ENCODE measurements at regions of chr4 and their contacts with region 1.

Region 1: GRCh38 chr4:85591406-85592098 is 116.6 kb downstream of the ARHGAP24 start:
- DNase-seq: no peak
- ATAC-seq: no peak
- H3K4me3 ChIP-seq: no peak overlapping the region
- H3K27ac ChIP-seq: no peak overlapping the region
- H3K4me1 ChIP-seq: peaks cover 0 to 18% (median 5%) of the 10 kb centered on the region in 12 donors
- H3K27me3 ChIP-seq: no peaks in the 10 kb centered on the region
- CTCF ChIP-seq: no peak
- POLR2A ChIP-seq: no peak

Region 2: DNA sequence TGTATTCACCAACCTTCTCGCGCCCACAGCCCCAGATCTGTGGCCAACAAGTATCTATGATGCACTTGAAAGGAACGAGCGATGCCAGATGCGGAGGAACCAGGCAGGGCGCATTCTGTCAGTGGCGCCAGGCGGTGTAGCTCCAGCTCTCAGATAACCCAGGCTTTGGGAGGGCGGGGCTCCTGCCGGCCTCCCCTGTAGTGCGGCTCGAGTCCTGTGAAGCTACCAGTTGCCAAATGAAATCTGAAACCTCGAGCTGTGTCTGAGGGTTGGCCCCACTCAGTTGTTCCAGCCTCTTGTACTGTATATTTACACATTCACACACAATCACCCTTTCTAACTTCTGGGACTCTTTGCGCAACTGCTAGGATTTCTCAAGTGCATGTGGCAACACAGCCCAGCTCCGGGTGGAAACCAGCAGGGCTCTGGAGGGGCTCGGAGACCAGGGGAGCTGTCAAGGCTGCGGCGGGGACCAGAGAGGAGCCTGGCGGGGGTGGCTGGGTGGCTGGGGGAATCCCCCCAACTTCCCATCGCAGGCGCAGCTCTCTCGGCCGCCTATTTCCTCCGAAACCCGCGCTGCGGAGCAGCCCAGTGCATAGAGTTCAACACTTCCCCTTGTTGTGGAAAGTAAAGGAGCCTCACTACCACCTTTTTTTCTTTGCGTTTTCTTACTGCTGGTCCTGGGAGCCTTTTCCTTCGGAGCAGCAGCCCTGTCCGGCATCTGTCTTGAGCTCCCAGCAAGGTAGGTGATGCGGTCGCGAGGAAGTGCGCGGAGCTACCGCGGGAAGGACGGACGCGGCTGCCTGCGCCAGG is 116.5 kb before region 1 on chr4 and contains the start of gene ARHGAP24:
- intact Hi-C with region 1: loop called in 2 of 10 experiments (anchors 5 to 10 kb)
- DNase-seq: peak; percentile 83 to 92 (median 90)
- ATAC-seq: peak; percentile 96 to 98 (median 98)
- H3K4me3 ChIP-seq: peak within 1 kb of the TSS; percentile 2 to 85 (median 71)
- H3K27ac ChIP-seq: peak within 1 kb of the TSS; percentile 47 to 90 (median 80)
- H3K4me1 ChIP-seq: peaks cover 0 to 28% (median 7%) of the 10 kb centered on the region in 12 donors
- H3K27me3 ChIP-seq: no peaks in the 10 kb centered on the region
- CTCF ChIP-seq: peak in 1 of 12 donors; percentile 13
- POLR2A ChIP-seq: peak in 1 of 2 donors; percentile 23
- total RNA-seq, gene ARHGAP24: 14.9 to 36.9 (median 25.1) TPM

Region 3: GRCh38 chr4:85725721-85726170 is 134.2 kb after region 1 on chr4:
- intact Hi-C with region 1: loop called in 2 of 10 experiments (anchors 5 to 10 kb)
- DNase-seq: peak; percentile 47 to 79 (median 65)
- ATAC-seq: peak; percentile 94 to 99 (median 95)
- H3K4me3 ChIP-seq: no peak overlapping the region
- H3K27ac ChIP-seq: peak overlapping the region; percentile 40 to 96 (median 68)
- H3K4me1 ChIP-seq: peaks cover 0 to 49% (median 27%) of the 10 kb centered on the region in 12 donors
- H3K27me3 ChIP-seq: no peaks in the 10 kb centered on the region
- CTCF ChIP-seq: no peak
- POLR2A ChIP-seq: peak in 1 of 2 donors; percentile 2

Region 4: GRCh38 chr4:85741921-85742591 is 150.5 kb after region 1 on chr4:
- intact Hi-C with region 1: loop called in 2 of 10 experiments (anchors 5 to 10 kb)
- DNase-seq: peak; percentile 33 to 68 (median 56)
- ATAC-seq: peak; percentile 20 to 75 (median 34)
- H3K4me3 ChIP-seq: no peak overlapping the region
- H3K27ac ChIP-seq: peak overlapping the region in 7 of 12 donors; percentile 3 to 89 (median 23)
- H3K4me1 ChIP-seq: peaks cover 0 to 69% (median 13%) of the 10 kb centered on the region in 12 donors
- H3K27me3 ChIP-seq: no peaks in the 10 kb centered on the region
- CTCF ChIP-seq: no peak
- POLR2A ChIP-seq: no peak

Region 5: DNA sequence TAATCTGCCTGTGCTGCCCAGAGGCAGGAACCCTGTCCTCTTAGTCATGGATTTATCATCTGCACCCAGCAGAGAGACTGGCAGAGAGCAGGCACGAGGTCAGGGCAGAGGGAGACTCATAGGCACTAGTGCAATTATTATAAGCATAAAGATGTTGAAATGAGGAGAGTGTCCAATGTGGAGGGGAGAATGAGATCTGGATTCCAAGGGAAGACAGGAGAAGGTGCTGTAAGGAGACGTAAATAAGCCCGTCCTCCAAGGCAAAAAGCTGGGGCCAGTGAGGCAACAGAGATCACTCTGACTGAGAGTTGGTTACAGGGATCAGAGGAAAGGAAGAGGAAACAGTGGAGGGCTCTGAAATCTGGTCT is 362.1 kb after region 1 on chr4:
- intact Hi-C with region 1: loop called in 1 of 10 experiments (anchors 10 kb)
- DNase-seq: no peak
- ATAC-seq: peak in 3 of 4 donors; percentile 72 to 89 (median 87)
- H3K4me3 ChIP-seq: no peak overlapping the region
- H3K27ac ChIP-seq: no peak overlapping the region
- H3K4me1 ChIP-seq: peaks cover 0 to 20% (median 10%) of the 10 kb centered on the region in 12 donors
- H3K27me3 ChIP-seq: no peaks in the 10 kb centered on the region
- CTCF ChIP-seq: no peak
- POLR2A ChIP-seq: no peak

Region 6: GRCh38 chr4:86564795-86565194 is 973.2 kb after region 1 on chr4:
- intact Hi-C with region 1: no loop called
- DNase-seq: no peak
- ATAC-seq: no peak
- H3K4me3 ChIP-seq: no peak overlapping the region
- H3K27ac ChIP-seq: no peak overlapping the region
- H3K4me1 ChIP-seq: no peaks in the 10 kb centered on the region
- H3K27me3 ChIP-seq: no peaks in the 10 kb centered on the region
- CTCF ChIP-seq: no peak
- POLR2A ChIP-seq: no peak

Measured in heart left ventricle (tissue), 16 donors.